PC-9 (cell line): ENCODE measurements at regions of chr14 and their contacts with region 1.

Region 1: GRCh38 chr14:32190672-32191071 is 11.2 kb upstream of the RNU6-7 start:
- DNase-seq: no peak
- H3K4me3 ChIP-seq: no peak overlapping the region
- H3K27ac ChIP-seq: no peak overlapping the region
- H3K4me1 ChIP-seq: no peaks in the 10 kb centered on the region
- H3K27me3 ChIP-seq: no peaks in the 10 kb centered on the region
- CTCF ChIP-seq: no peak

Region 2: DNA sequence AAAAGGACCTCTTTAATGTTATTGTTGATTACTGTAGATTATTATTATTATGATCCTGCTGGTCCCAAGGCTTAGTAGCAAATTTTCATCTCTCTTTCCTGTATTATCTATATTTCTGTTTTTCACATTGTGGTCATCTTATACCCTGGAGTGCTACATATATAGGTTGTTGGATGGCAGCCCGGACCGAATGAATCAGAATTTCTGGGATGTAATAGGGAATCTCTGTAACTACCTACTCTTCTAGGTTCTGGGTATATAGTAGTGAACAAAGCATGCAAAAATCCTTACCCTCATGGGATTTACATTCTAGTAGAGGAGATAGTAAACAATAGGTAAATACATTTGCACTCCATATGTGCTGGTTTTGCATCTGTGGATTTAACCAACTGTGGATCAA is 598.0 kb before region 1 on chr14:
- CTCF ChIA-PET with region 1: interaction called, 10 read pairs
- POLR2A ChIA-PET with region 1: no interaction called
- intact Hi-C with region 1: no loop called
- DNase-seq: no peak
- H3K4me3 ChIP-seq: no peak overlapping the region
- H3K27ac ChIP-seq: no peak overlapping the region
- H3K4me1 ChIP-seq: no peaks in the 10 kb centered on the region
- H3K27me3 ChIP-seq: no peaks in the 10 kb centered on the region
- CTCF ChIP-seq: no peak

Region 3: DNA sequence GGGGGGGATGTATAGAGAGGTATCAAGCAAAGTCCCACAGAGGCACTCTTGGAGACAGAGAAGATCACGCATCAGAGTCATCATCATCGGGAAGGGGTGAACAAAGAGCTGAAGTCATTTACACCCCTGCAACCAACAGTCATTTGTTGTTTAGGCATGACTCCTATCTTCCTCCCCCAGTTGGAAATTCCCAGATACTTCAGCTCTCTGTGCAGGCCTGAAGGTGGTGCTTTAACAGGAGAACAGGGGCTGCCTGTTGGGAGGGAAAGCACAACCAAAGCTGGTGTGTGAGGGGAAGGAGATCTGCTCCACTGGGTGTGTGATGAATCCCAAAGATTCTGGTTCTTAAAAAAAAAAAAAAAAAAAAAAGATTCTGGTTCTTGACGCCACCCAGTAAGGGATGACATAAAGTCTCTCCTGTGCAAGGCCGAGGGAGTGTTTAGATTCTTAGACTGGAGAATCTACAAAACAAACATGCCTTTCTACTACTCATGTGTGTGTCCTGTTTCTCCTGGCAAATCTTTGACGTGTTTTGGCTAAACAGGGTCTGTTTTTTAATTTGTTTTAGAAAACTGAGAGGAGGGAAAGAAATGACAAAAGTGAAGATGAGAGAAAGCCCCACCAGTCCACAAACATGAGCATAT is 234.6 kb before region 1 on chr14:
- CTCF ChIA-PET with region 1: no interaction called
- POLR2A ChIA-PET with region 1: no interaction called
- intact Hi-C with region 1: no loop called
- DNase-seq: no peak
- H3K4me3 ChIP-seq: no peak overlapping the region
- H3K27ac ChIP-seq: no peak overlapping the region
- H3K4me1 ChIP-seq: 0 out of 2 replicates have a peak, but pooled peaks cover 2% of the 10 kb centered on the region
- H3K27me3 ChIP-seq: no peaks in the 10 kb centered on the region
- CTCF ChIP-seq: no peak